ENCODE measurements at regions of chr6 and their contacts with region 1.

Region 1: GRCh38 chr6:17484201-17484849 is 90.9 kb downstream of the CAP2 start:
- DNase-seq: peak; percentile 39 to 76
- ATAC-seq: peak; percentile 84 to 90 (median 88)
- H3K4me3 ChIP-seq: peak overlapping the region; percentile 13
- H3K27ac ChIP-seq: peak overlapping the region; percentile 88
- H3K4me1 ChIP-seq: peaks cover 33% of the 10 kb centered on the region
- H3K27me3 ChIP-seq: no peaks in the 10 kb centered on the region
- CTCF ChIP-seq: no peak

Region 2: GRCh38 chr6:17167327-17167979 is 316.9 kb before region 1 on chr6:
- intact Hi-C with region 1: loop called in 1 of 2 experiments (anchors 10 kb)
- DNase-seq: peak; percentile 28 to 63
- ATAC-seq: peak; percentile 64 to 72 (median 68)
- H3K4me3 ChIP-seq: peak overlapping the region; percentile 24
- H3K27ac ChIP-seq: peak overlapping the region; percentile 96
- H3K4me1 ChIP-seq: peaks cover 19% of the 10 kb centered on the region
- H3K27me3 ChIP-seq: no peaks in the 10 kb centered on the region
- CTCF ChIP-seq: peak; percentile 61

Region 3: GRCh38 chr6:17311595-17312311 is 172.6 kb before region 1 on chr6:
- intact Hi-C with region 1: loop called in 1 of 2 experiments (anchors 10 kb)
- DNase-seq: peak; percentile 64 to 85
- ATAC-seq: peak; percentile 94 to 97 (median 95)
- H3K4me3 ChIP-seq: peak overlapping the region; percentile 61
- H3K27ac ChIP-seq: peak overlapping the region; percentile 95
- H3K4me1 ChIP-seq: peaks cover 3% of the 10 kb centered on the region
- H3K27me3 ChIP-seq: no peaks in the 10 kb centered on the region
- CTCF ChIP-seq: no peak

Region 4: DNA sequence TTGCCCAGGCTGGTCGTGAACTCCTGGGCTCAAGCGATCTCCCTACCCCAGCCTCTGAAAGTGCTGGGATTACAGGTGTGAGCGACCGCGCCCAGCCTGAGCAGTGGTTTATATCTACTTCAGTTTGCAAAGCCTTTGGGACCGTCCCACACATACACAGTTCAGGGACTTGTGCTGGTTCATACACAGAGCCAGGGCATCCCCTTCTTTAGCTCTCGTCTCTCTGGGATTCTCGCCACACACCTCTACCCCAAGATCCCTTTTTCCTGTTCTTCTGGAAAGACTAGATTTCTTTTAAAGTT is 78.4 kb before region 1 on chr6:
- intact Hi-C with region 1: no loop called
- DNase-seq: no peak
- ATAC-seq: peak; percentile 31 to 49 (median 40)
- H3K4me3 ChIP-seq: no peak overlapping the region
- H3K27ac ChIP-seq: peak overlapping the region; percentile 76
- H3K4me1 ChIP-seq: peaks cover 39% of the 10 kb centered on the region
- H3K27me3 ChIP-seq: no peaks in the 10 kb centered on the region
- CTCF ChIP-seq: no peak

Region 5: DNA sequence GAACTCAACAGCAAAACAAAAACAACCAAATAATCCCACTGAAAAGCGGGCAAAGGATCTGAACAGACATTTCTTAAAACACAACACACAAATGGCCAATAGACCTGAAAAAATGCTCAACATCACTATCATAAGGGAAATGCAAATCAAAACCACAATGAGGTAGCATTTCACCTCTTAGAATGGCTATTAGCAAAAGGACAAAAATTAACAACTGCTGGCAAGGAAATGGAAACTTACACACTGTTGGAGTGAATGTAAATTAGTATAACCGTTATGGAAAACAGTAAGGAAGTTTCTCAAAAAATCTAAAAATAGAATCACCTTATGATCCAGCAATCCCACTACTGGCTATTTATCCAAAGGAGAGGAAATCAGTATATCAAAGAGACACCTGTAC is 136.7 kb after region 1 on chr6:
- intact Hi-C with region 1: no loop called
- DNase-seq: no peak
- ATAC-seq: no peak
- H3K4me3 ChIP-seq: no peak overlapping the region
- H3K27ac ChIP-seq: no peak overlapping the region
- H3K4me1 ChIP-seq: no peaks in the 10 kb centered on the region
- H3K27me3 ChIP-seq: no peaks in the 10 kb centered on the region
- CTCF ChIP-seq: no peak